Ascending aorta (tissue), 2 donors: ENCODE measurements at regions of chr6 and their contacts with region 1.

Region 1: DNA sequence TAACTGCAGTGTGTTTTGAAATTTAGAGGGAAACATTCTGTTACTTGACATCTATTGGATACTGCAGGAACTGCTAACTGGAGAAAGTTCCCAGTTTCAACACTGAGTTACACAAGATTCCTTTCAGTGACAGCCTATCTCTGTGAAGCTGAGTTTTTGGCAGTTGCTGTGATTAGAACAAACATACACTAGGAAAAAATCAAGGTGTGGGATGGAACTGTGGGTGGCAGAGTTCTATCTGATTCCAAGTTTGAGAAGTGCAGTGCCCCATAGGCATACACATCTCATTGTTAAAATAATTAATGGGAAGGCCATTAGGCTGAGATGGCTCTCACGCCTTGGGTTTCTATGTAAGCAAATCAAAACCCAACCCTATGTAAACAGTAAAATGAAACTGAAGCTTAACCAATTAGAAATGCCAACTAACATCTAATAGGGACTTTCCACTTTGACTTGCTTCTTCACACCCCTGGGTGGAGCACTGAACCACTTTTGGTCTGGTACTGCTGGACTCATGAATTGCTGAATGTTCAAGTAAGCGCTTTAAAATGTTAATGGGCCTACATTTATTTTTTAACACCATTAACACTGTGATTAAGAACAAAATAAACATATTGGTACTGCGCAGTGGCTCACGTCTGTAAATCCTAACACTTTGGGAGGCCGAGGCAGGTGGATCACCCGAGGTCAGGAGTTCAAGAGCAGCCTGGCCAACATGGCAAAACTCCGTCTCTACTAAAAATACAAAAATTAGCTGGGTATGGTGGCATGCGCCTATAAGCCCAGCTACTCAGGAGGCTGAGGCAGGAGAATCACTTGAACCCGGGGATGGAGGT is 55.2 kb upstream of the TBC1D7 start:
- DNase-seq: no peak
- H3K4me3 ChIP-seq: no peak overlapping the region
- H3K27ac ChIP-seq: no peak overlapping the region
- H3K4me1 ChIP-seq: no peaks in the 10 kb centered on the region
- H3K27me3 ChIP-seq: no peaks in the 10 kb centered on the region
- CTCF ChIP-seq: peak in 2 of 3 experiments; percentile 26 to 50

Region 2: DNA sequence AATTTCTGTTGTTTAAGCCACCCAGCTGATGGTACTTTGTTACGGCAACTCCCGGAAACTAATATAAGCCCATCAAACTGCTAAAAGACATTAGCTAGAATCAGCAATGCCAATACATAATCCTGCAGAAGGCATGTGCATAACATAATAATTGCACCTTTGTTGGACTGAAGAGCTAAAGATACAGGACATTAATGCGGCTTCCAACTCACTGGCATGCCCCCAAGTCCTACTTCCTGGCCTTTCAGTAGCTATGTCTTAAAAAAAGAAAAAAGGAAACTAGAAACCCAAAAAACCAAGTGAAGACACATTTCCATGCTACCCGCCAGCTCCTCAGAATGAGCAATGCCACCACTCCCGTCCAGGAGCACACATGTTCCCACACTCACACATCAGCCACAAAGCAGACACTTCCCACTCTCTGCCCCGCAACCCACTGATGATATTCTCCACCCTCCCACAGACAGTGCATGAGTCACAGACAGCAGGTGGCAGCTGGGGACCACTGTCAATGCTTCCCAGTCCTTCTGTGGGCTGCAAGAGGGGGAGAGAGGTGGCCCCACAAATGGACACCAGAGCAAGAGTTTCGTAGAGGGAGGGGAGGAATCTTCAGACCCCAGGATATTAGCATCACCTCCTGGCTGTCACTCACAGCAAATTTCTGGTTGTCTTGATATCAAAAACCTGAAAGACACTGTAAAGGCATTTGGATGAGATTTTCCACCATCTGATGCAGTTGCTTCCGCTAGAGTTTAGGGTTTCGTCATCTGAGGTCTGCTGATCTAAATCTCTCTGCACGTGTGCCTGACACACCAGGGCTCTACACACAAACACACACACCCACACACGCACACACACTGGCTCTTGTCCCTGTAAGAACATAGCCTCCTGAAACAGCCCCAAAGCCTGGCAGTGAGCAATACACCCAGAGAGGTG is 71.0 kb after region 1 on chr6:
- intact Hi-C with region 1: no loop called
- DNase-seq: peak; percentile 26 to 77
- H3K4me3 ChIP-seq: no peak overlapping the region
- H3K27ac ChIP-seq: no peak overlapping the region
- H3K4me1 ChIP-seq: peaks cover 0 to 6% of the 10 kb centered on the region in 2 donors
- H3K27me3 ChIP-seq: no peaks in the 10 kb centered on the region
- CTCF ChIP-seq: no peak

Region 3: DNA sequence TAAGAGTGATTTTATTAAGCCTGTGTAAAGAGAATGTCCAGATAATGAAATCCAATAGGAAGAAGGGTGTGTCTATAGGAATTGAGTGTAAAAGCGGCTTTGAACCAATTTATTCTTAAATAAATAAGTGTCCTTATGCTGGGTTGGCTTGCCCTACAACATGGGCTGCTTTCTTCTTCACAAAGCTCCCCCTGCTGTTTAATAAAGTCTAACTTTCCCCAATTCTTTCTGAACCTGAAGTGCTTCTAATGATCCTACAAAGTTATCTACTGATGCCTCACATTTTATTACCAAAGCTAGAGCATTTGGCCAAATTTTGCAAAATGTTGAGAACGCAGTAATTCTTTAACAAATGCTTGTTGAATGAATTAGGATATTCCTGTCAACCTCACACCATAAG is 154.5 kb after region 1 on chr6:
- intact Hi-C with region 1: loop called (anchors 2 kb)
- DNase-seq: no peak
- H3K4me3 ChIP-seq: no peak overlapping the region
- H3K27ac ChIP-seq: no peak overlapping the region
- H3K4me1 ChIP-seq: no peaks in the 10 kb centered on the region
- H3K27me3 ChIP-seq: no peaks in the 10 kb centered on the region
- CTCF ChIP-seq: peak; percentile 30 to 59 (median 39)